CD4-positive, alpha-beta T cell (primary cell): ENCODE measurements at regions of chr2 and their contacts with region 1.

Region 1: DNA sequence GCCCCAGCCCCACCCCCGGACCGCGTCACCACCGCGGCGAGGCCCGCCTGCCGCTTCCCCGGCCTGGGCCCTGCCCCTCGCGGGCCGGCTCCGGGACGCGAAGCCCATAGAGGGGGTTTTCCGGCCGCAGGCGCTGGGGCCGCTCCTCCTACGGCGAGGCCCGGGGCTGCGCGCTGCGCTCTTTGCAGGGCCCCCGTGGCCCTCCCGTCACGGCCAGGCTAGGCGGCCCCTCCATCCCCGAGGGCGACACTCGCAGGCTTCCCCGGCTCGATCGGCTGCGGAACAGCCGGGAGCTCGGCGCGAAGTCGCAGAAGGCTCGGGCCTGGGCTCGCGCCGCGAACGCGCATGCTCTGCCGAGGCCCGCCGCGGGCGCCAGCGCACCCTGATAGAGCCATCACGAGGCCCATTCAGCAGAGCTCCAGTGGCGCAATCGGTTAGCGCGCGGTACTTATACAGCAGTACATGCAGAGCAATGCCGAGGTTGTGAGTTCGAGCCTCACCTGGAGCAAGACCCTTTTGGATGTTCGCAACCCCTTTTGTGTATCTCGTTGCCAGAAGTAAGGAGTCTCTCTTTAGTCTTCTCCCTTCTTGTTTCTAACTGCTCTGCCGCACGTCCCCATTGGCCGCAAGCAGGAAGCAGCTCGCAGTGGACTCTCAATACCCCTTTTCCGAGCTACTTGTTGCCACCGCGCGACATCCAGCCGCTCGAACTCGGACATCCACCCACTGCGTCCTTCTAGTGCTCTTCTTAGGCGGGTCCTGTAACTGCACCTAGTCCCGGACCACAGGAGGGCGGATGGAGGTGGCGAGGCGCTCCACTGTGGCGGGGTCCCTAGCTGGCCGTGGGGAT is 18.0 kb upstream of the HAAO start:
- DNase-seq: peak; percentile 92 to 99 (median 96)
- ATAC-seq: peak; percentile 78
- H3K4me3 ChIP-seq: peak overlapping the region; percentile 89
- H3K4me3 Mint-ChIP-seq: peak overlapping the region; percentile 98
- H3K27ac ChIP-seq: peak overlapping the region; percentile 93
- H3K27ac Mint-ChIP-seq: peak overlapping the region; percentile 100
- H3K4me1 ChIP-seq: peaks cover 27% of the 10 kb centered on the region
- H3K4me1 Mint-ChIP-seq: peaks cover 30% of the 10 kb centered on the region
- H3K27me3 ChIP-seq: no peaks in the 10 kb centered on the region
- H3K27me3 Mint-ChIP-seq: peaks cover 7% of the 10 kb centered on the region
- CTCF ChIP-seq: no peak

Region 2: GRCh38 chr2:41840702-41841551 is 969.4 kb before region 1 on chr2:
- CTCF ChIA-PET with region 1: no interaction called
- POLR2A ChIA-PET with region 1: no interaction called
- intact Hi-C with region 1: loop called in 1 of 2 experiments (anchors 10 kb)
- DNase-seq: peak; percentile 96 to 99 (median 97)
- ATAC-seq: peak; percentile 97
- H3K4me3 ChIP-seq: peak overlapping the region; percentile 90
- H3K4me3 Mint-ChIP-seq: peak overlapping the region; percentile 99
- H3K27ac ChIP-seq: peak overlapping the region; percentile 76 to 87
- H3K27ac Mint-ChIP-seq: peak overlapping the region; percentile 93
- H3K4me1 ChIP-seq: peaks cover 15% of the 10 kb centered on the region
- H3K4me1 Mint-ChIP-seq: peaks cover 17% of the 10 kb centered on the region
- H3K27me3 ChIP-seq: peaks cover 6 to 21% of the 10 kb centered on the region in 2 experiments
- H3K27me3 Mint-ChIP-seq: peaks cover 48% of the 10 kb centered on the region
- CTCF ChIP-seq: peak; percentile 95

Region 3: DNA sequence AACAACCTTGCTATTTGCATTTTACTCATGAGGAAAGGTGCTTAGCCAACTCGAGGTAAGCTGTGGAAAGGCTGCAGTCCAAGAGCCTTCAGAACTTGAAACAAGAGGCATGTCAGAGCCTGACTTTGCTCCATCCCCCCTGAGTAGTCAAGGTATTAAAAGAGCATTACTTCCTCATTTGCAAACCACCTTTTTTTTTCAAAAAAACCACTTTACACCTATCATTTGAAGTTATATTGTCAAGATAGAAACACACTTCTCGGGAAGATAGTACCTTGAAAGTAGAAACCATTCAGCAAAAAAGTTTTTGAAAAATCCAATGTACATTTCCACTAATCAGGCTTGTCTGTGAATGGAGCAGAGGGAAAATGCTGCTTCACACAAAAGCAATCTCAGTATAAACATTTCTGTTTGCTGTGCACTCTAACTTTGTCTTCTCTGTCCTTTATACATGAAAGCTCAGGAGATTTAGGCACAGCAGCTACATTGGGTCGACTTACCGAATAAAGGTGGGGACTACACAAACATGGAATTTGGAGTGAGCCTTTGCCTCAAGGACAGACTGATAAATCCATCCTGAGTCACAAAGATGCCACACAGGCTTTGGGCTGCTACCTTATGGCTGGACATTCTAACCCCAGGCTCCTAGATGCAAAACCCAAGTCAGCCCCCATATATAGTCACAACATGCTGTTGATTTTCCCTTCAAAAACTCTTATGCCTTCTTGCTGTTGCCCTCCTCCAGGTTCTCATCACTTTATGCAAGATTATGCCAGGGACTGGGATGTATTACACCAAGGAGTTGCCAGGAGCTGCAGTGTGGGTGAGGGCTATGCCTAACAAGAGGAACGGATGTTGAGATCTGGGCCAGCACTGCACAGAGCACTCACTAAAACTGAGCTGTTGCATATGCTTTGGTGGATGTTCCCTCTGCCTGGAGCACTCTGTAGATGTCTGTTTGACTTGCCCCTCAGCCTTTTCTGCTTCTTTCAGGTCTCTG is 682.6 kb before region 1 on chr2:
- CTCF ChIA-PET with region 1: no interaction called
- POLR2A ChIA-PET with region 1: no interaction called
- intact Hi-C with region 1: no loop called
- DNase-seq: peak in 10 of 14 experiments; percentile 20 to 77 (median 40)
- ATAC-seq: peak; percentile 45
- H3K4me3 ChIP-seq: peak overlapping the region; percentile 2
- H3K4me3 Mint-ChIP-seq: peak overlapping the region; percentile 83
- H3K27ac ChIP-seq: peak overlapping the region; percentile 56 to 62
- H3K27ac Mint-ChIP-seq: peak overlapping the region; percentile 86
- H3K4me1 ChIP-seq: peaks cover 94% of the 10 kb centered on the region
- H3K4me1 Mint-ChIP-seq: peaks cover 91% of the 10 kb centered on the region
- H3K27me3 ChIP-seq: no peaks in the 10 kb centered on the region
- H3K27me3 Mint-ChIP-seq: no peaks in the 10 kb centered on the region
- CTCF ChIP-seq: no peak

Region 4: DNA sequence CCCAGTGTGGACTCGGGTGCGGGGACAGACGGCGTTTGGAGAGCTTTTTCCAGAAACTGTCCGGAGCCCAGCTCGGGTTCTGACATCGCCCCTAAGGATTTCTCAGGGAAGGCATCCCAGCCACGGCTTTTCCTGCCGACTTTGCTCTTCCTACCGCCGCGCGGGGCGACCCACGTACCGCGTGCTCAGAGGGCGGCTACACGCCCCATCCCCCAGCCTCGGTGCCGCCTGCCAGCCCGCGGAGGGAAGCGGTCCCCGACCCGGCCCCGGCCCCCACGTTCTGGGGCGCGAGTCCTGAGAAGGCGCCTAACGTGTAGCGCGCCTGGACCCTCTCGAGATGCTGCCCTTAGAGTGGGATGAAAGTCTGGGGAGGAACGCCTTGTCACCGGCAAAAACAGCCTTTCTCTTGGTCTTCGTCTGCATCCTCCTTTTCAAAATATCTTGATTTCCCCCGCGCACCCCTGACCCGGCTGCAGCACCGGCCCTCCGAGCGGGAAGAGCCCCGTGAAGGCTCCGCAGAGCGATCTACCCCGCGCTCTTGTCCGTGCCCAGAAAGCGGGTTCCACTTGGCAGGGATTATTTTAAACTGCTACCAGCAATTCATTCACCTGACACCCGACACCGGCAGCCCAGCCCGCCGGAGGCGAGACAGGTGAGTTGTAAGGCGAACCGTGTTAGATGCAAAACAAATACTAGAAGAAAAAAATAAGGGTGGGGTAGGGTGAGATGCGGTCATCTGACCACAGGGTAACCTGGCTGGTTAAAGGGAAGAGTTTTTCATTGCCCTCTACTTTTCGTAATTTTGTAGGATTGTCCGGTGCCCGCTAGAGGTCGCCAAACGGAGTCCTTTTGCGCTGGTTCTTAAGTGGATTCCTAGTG is 315.8 kb before region 1 on chr2:
- CTCF ChIA-PET with region 1: no interaction called
- POLR2A ChIA-PET with region 1: interaction called, 7 read pairs
- intact Hi-C with region 1: loop called in 1 of 2 experiments (anchors 10 kb)
- DNase-seq: peak; percentile 52 to 84 (median 68)
- ATAC-seq: peak; percentile 47
- H3K4me3 ChIP-seq: peak overlapping the region; percentile 56
- H3K4me3 Mint-ChIP-seq: peak overlapping the region; percentile 96
- H3K27ac ChIP-seq: no peak overlapping the region
- H3K27ac Mint-ChIP-seq: peak overlapping the region; percentile 68
- H3K4me1 ChIP-seq: peaks cover 17% of the 10 kb centered on the region
- H3K4me1 Mint-ChIP-seq: peaks cover 8% of the 10 kb centered on the region
- H3K27me3 ChIP-seq: peaks cover 0 to 6% of the 10 kb centered on the region in 2 experiments
- H3K27me3 Mint-ChIP-seq: no peaks in the 10 kb centered on the region
- CTCF ChIP-seq: peak; percentile 90

Region 5: DNA sequence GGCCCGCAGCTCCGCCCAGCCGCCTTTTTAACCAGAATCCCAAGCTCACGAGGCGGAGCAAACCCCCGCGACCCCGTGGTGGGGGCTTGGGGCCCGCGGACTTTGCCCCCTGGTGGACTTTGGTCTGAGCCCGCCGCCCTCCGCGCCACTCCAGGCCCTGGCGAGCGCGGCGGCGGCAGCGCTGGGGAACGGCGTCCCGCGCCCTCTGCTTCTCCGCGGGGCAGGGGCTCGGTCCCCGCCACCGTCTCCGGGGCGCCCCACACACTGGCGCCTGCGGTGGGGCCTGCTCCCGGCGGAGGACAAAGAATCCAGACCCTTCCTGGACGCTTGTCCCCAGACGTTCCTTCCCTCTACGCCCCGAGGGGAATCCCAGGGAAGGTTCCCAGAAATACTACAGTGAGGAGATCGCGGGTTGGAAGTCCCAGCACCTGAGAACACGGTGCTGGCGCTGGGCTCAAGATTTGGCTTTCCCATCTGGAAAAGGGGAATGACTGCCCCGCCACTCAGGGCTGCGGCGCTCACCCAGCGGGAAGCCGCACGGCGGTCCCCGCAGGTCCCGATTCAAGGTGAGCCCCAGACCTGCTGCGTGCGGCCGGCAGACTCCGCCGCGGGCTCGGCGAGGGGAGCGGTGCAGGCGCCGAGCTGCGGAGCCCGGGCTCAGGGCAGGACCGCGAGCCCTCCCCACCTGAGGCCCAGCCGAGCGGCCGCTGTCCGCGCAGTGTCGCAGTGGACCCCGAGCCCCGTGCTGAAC is 17.6 kb before region 1 on chr2 and contains the start of gene HAAO:
- CTCF ChIA-PET with region 1: no interaction called
- POLR2A ChIA-PET with region 1: interaction called, 44 read pairs
- intact Hi-C with region 1: no loop called
- DNase-seq: peak in 3 of 14 experiments; percentile 19 to 31 (median 31)
- ATAC-seq: peak; percentile 60
- H3K4me3 ChIP-seq: peak within 1 kb of the TSS; percentile 47
- H3K4me3 Mint-ChIP-seq: peak within 1 kb of the TSS; percentile 89
- H3K27ac ChIP-seq: no peak within 1 kb of the TSS
- H3K27ac Mint-ChIP-seq: no peak within 1 kb of the TSS
- H3K4me1 ChIP-seq: peaks cover 22% of the 10 kb centered on the region
- H3K4me1 Mint-ChIP-seq: peaks cover 30% of the 10 kb centered on the region
- H3K27me3 ChIP-seq: peaks cover 20 to 28% of the 10 kb centered on the region in 2 experiments
- H3K27me3 Mint-ChIP-seq: peaks cover 48% of the 10 kb centered on the region
- CTCF ChIP-seq: no peak
- total RNA-seq, gene HAAO: not detected

Region 6: GRCh38 chr2:43219383-43220228 is 409.3 kb after region 1 on chr2:
- CTCF ChIA-PET with region 1: no interaction called
- POLR2A ChIA-PET with region 1: interaction called, 14 read pairs
- intact Hi-C with region 1: no loop called
- DNase-seq: peak; percentile 65 to 93 (median 76)
- ATAC-seq: peak; percentile 38
- H3K4me3 ChIP-seq: peak overlapping the region; percentile 97
- H3K4me3 Mint-ChIP-seq: peak overlapping the region; percentile 87
- H3K27ac ChIP-seq: peak overlapping the region; percentile 62 to 92
- H3K27ac Mint-ChIP-seq: peak overlapping the region; percentile 98
- H3K4me1 ChIP-seq: peaks cover 69% of the 10 kb centered on the region
- H3K4me1 Mint-ChIP-seq: peaks cover 62% of the 10 kb centered on the region
- H3K27me3 ChIP-seq: no peaks in the 10 kb centered on the region
- H3K27me3 Mint-ChIP-seq: peaks cover 19% of the 10 kb centered on the region
- CTCF ChIP-seq: no peak

Region 7: DNA sequence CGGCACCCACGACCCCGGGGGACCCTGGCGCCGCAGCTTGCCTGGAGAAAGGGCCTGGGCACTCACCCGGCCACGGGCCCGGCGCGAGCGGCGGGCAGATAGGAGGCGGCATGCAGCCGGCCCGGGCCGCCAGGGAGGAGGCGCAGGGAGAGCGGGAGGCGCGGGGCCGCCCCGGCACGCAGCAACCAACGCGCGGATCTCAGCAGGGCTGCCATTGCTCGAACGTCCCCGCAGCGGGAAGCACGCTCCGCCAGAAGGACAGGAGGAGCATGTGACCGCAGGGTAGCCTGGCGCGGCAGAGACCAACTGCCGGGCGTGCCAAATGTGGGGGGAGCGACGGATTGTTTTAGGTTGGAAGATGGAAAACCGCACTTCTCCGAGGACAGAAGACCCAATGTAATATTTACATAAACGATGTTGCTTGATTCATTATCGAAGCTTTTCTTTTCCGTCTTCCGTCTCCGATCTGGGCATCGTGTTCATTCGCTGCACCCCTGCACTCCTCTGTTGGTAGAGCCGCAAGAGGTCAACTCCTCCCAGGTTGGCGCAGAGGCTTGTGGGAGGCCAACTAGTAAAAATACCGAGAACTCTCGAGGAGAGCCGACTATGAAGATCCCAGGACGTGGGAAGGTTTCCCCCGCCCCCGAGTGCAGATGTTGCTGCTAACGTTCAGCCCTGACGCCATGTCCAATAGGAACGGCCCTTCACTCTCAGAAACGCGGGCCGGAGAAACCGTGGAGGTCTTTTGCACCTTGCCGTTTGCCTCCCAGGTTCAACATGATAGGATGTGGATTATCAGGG is 1185.6 kb after region 1 on chr2 and contains the start of gene LRPPRC:
- CTCF ChIA-PET with region 1: no interaction called
- POLR2A ChIA-PET with region 1: interaction called, 3 read pairs
- intact Hi-C with region 1: loop called in 1 of 2 experiments (anchors 10 kb)
- DNase-seq: peak; percentile 80 to 96 (median 85)
- ATAC-seq: peak; percentile 95
- H3K4me3 ChIP-seq: peak within 1 kb of the TSS; percentile 99
- H3K4me3 Mint-ChIP-seq: peak within 1 kb of the TSS; percentile 91
- H3K27ac ChIP-seq: peak within 1 kb of the TSS; percentile 74 to 91
- H3K27ac Mint-ChIP-seq: peak within 1 kb of the TSS; percentile 89
- H3K4me1 ChIP-seq: peaks cover 32% of the 10 kb centered on the region
- H3K4me1 Mint-ChIP-seq: peaks cover 47% of the 10 kb centered on the region
- H3K27me3 ChIP-seq: no peaks in the 10 kb centered on the region
- H3K27me3 Mint-ChIP-seq: peaks cover 6% of the 10 kb centered on the region
- CTCF ChIP-seq: no peak
- total RNA-seq, gene LRPPRC: 55.2 to 55.4 TPM